Left cardiac atrium (tissue), 4 donors: ENCODE measurements at regions of chr3 and their contacts with region 1.

Region 1: DNA sequence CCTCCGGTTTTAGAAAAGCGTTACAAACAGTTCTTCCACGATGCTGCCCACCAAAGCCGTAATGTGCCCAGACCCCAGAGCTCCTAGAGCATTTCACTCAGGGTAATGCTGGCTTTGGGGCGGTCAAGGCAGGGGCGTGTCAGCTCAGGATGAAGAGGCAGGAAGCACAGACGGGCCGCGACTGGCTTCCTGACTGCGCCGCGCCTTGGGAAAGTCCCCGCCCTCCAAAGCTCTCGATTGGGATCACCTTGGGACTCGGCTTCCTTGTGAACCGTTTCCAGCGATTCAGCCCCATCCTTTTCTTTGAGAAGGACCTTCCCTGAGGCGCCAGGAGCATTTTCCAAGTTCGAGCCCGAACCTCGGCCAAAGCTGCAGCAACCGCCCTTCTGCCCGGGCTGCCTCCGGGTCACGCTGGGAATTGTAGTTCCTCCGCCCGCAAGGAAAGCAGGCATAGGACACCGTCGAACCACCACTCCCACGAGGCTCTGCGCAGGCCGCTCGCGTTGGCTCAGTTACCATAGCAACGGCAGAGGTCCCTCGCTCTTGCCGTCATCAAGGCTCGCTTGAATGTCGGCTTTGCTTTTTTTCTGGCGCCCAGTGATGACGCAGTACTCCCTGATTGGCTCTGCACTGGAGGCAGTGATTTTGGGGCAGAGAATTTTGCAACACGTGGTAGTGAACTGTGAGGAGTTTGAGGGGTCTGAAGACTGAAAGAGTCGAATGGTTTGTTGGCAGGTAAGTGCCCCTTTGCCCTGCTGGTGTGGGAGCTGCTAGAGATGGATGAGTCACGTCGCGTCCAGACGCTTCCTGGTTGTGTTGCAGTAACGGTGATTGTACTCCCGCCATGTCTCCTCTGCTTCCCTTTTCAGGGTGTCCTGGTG is at the starts of genes CCDC191 and QTRT2:
- DNase-seq: peak; percentile 99
- ATAC-seq: peak; percentile 99 to 100
- total RNA-seq, gene CCDC191: 1.3 to 1.4 TPM
- total RNA-seq, gene QTRT2: 7.7 to 11.4 TPM

Region 2: DNA sequence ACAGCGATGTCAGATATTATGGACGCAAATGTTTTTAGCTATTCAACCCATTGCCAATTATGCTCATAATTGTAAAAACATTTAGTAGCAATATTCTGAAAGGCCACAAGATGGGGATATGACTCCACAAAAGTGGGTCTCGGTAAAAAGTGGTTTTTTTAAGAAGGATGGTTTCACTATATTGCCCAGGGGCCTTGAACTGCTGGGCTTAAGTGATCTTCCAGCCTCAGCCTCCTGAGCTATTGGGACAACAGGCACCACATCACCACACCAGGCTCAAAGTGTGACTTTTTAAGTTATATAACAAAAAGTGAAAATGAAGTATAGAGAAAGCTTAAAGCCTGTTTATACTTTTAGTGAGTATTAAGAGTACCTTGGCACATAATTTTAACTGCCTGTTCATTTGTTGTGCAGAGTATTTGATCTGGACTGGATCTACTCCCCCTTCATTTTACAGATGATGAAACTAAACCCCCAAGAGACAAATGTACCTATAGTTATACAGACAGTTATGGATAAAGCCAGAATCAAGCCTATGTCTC is 319.8 kb before region 1 on chr3:
- intact Hi-C with region 1: loop called in 1 of 2 experiments (anchors 10 kb)
- DNase-seq: no peak
- ATAC-seq: peak; percentile 76 to 82

Region 3: DNA sequence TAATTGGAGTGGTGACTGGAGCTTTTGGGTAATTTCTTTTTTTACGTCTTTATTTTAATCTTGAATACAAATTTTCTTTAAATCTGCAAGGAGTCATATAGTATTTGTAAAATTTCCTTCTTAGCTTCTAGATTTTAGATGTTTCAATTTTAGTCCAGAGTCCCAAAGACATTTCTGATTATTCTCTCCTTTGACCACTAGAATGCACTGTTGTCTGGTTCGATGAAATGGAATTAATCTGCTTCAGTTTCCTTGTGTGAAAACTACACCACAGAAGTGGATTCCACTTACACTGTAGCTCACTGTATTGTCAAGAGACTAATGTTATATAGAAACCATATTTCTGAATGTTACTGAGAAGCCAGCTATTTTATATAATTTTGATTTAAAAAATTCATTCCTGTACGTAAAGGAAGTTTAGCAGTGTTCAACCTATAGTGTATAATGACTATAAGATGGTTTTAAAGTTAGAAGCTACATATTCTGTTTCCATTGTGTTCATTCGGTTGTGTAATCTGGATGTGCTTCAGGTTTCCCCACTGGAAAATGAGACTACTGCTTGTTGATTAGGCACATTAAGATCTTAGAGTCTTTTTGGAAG is 211.6 kb before region 1 on chr3:
- intact Hi-C with region 1: loop called in 1 of 2 experiments (anchors 10 kb)
- DNase-seq: no peak
- ATAC-seq: no peak